ENCODE measurements at regions of chr16 and their contacts with region 1.

Region 1: GRCh38 chr16:57757326-57757786 is 21.8 kb downstream of the KATNB1 start:
- DNase-seq: peak; percentile 91
- H3K4me3 ChIP-seq: no peak overlapping the region
- H3K27ac ChIP-seq: no peak overlapping the region
- H3K4me1 ChIP-seq: no peaks in the 10 kb centered on the region
- H3K27me3 ChIP-seq: no peaks in the 10 kb centered on the region
- CTCF ChIP-seq: peak; percentile 89 to 99 (median 97)
- EP300 ChIP-seq: no peak
- POLR2A ChIP-seq: no peak

Region 2: DNA sequence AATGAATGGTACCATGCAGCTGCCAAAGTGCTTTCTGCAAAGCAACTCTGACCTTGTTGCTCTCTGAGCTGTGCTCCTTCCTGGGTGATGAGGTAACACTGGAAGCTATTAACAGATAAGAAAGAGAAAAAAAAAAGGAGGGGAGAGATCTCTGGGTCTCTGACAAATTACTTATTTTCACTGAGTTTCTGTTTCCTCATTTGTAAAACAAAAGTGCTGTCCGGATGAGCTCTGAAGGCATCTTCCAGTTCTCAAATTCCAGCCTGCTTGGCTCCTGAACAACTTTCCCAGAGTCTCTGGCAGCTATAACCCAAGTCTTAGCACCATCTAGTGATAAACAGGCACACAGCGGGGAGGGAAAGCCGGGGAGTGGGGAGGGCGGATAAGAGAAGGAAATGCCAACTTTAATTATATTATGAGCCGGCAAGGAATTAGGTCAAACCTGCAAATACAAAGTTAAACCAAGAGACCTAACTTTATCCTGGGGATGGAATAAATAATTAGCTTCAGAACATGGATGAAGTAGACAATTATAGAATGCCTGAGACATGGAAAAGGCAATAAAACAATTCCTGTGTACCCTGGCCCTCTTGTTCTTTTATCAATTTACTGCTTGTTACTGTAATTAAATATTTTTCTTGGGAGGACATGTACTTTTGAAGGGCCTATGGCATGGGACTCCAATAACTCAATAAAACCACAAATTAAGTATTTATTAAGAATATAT is 106.2 kb after region 1 on chr16:
- in situ Hi-C with region 1: no loop called
- intact Hi-C with region 1: loop called (anchors 2 kb)
- DNase-seq: peak; percentile 59
- H3K4me3 ChIP-seq: no peak overlapping the region
- H3K27ac ChIP-seq: no peak overlapping the region
- H3K4me1 ChIP-seq: peaks cover 0 to 7% (median 2%) of the 10 kb centered on the region in 4 donors
- H3K27me3 ChIP-seq: peaks cover 11% of the 10 kb centered on the region
- CTCF ChIP-seq: peak; percentile 39 to 51 (median 49)
- EP300 ChIP-seq: no peak
- POLR2A ChIP-seq: no peak

Region 3: DNA sequence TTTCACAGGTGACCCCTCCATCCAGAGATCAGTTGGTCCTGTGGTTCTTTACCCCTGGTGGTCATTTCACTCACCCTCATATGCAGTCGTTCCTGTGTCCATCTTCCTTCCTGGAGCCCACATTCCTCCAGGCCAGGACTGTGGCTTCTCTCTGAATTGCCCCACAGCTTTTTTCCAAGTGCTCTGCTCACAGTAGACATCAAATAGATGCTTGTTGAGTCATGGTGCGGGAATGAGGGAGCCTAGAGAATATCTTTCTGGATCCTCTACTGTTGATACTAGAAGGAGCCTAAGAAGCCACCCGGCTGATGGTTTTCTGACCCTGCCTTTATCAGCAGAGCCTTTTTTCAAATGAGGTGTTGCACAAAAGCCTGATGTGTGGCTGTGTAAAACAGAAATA is 254.3 kb after region 1 on chr16:
- in situ Hi-C with region 1: loop called in 3 of 4 experiments (anchors 25 kb)
- intact Hi-C with region 1: loop called (anchors 10 kb)
- DNase-seq: no peak
- H3K4me3 ChIP-seq: no peak overlapping the region
- H3K27ac ChIP-seq: no peak overlapping the region
- H3K4me1 ChIP-seq: no peaks in the 10 kb centered on the region
- H3K27me3 ChIP-seq: no peaks in the 10 kb centered on the region
- CTCF ChIP-seq: no peak
- EP300 ChIP-seq: no peak
- POLR2A ChIP-seq: no peak